HEK293 (cell line): ENCODE measurements at regions of chr3 and their contacts with region 1.

Region 1: DNA sequence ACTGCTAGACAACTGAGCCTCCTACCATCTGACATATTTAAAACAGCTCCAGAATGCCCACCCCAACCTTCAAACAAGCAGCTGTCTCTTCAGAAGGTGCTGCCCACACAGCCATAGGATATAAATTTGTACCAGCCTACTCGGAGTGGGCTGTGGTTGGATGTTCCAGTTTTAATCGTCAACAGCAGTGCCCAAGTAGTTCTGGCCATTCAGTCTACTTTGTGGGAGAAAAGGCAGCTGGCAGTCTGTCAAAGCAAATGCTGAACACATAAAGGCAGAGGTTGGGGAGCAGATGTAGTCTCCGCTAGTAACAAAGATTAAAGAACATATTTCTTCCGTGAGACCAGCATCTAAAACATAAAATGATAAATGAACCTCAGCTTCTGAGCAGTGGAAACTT is 15.9 kb upstream of the ERC2 start:
- H3K4me3 ChIP-seq: no peak overlapping the region
- H3K27ac ChIP-seq: no peak overlapping the region
- H3K4me1 ChIP-seq: no peaks in the 10 kb centered on the region
- CTCF ChIP-seq: no peak

Region 2: DNA sequence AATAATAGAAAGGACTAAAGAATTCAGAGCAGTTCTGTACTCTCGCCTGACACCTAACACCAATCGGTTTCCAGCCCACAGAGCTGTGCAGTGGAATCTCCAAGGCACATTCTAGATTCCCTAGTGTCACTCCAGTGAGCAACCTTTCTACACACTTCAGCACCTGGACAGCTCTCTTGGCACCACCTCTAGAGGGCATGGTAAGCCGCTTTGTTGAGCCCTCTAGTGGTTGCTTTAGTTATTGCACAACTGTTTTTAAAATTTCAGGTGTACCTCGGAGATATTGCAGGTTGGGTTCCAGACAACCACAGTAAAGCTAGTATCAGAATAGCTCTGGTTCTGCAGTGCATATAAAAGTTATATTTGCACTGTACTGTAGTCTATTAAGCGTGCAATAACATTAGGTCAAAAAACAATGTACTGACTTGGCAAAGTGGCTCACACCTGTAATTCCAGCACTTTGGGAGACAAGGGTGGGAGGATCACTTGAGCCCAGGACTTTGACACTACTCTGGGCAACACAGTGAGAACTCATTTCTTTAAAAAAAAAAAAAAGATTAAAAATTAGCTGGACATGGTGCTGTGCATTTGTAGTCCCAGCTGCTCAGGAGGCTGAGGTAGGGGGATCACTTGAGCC is 10.7 kb after region 1 on chr3:
- CTCF ChIA-PET with region 1: interaction called, 13 read pairs
- POLR2A ChIA-PET with region 1: no interaction called
- H3K4me3 ChIP-seq: no peak overlapping the region
- H3K27ac ChIP-seq: no peak overlapping the region
- H3K4me1 ChIP-seq: no peaks in the 10 kb centered on the region
- CTCF ChIP-seq: peak; percentile 92